ENCODE measurements at regions of chr2 and their contacts with region 1.

Region 1: DNA sequence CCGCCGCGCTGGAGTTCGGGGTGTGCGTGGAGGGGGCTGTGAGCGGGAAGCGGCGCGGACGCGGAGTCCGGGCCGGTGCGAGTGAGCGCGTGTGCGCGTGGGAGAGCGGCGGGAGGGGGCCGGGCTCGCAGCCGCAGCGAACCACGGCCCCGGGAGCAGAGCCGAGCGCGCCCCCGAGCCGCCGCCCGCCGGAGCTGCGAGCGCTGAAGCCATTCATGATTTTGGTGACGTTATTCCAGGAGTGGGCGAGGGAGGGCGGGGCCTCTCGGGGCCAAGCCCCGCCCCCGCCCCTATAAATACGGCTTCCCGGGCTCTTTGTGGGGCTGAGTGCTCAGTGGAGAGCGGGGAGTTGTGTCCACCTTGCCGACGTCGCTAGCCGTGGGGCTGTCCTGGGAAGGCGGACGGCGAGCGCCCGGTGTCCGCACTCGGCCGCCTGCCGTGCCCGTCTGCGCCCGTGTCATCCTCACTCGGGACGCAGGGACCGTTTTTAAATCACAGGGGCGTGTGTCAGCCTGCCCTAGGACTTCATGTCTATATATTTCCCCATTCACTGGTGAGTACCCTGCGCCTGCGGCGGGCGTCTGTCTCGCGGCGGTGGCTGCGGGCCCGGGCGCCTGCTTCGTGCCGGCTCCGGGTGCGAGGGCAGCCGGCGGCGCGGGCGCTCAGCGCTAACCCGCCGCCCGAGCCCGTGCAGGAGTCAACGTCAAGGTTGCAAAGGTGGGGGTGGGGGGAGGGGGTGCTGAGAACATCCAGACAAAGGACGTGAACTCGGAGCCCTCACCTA is at the start of gene LBH:
- DNase-seq: peak; percentile 91 to 93 (median 91)
- ATAC-seq: peak; percentile 83 to 87 (median 86)
- H3K4me3 ChIP-seq: peak within 1 kb of the TSS; percentile 72 to 98 (median 90)
- H3K27ac ChIP-seq: peak within 1 kb of the TSS; percentile 89 to 100 (median 96)
- H3K4me1 ChIP-seq: peaks cover 0 to 57% (median 41%) of the 10 kb centered on the region in 12 donors
- H3K27me3 ChIP-seq: peaks cover 0 to 9% (median 0%) of the 10 kb centered on the region in 9 donors
- CTCF ChIP-seq: peak in 1 of 12 donors; percentile 13
- POLR2A ChIP-seq: peak; percentile 92 to 100
- total RNA-seq, gene LBH: 125 to 226 (median 169) TPM

Region 2: GRCh38 chr2:30098266-30099005 is 133.0 kb before region 1 on chr2:
- intact Hi-C with region 1: no loop called
- DNase-seq: no peak
- ATAC-seq: no peak
- H3K4me3 ChIP-seq: no peak overlapping the region
- H3K27ac ChIP-seq: no peak overlapping the region
- H3K4me1 ChIP-seq: no peaks in the 10 kb centered on the region
- H3K27me3 ChIP-seq: peaks cover 0 to 27% (median 6%) of the 10 kb centered on the region in 9 donors
- CTCF ChIP-seq: no peak
- POLR2A ChIP-seq: no peak

Region 3: DNA sequence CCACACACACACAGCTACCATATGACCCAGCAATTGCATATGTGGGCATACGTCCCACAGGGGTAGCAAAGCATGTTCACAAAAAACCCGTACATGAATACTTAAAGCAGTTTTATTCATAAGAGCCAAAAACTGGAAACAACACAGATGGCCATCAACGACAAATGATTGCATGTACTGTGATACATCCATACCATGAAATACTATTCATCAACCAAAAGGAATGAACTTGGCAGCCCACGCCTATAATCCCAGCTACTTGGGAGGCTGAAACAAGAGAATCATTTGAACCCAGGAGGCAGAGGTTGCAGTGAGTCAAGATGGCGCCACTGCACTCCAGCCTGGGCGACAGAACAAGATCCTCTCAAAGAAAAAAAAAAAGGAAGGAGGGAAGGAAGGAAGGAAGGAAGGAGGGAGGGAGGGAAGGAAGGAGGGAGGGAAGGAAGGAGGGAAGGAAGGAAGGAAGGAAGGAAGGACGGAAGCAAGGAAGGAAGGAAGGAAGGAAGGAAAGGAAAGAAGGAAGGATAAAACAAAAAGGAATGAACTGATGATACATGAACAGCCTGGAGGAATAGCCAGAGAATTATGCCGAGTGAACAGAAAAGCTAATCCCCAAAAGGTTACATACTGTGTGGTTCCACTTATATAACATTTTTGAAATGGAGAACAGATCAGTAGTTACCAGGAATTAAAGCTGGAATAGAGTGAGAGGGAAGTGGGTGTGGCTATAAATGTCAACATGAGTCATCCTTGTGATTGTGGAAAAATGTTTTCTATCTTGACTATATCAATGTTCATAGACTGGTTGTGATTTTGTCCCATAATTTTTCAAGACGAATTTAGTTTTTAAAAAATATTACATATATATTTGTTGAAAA is 104.1 kb before region 1 on chr2:
- intact Hi-C with region 1: no loop called
- DNase-seq: no peak
- ATAC-seq: no peak
- H3K4me3 ChIP-seq: no peak overlapping the region
- H3K27ac ChIP-seq: no peak overlapping the region
- H3K4me1 ChIP-seq: no peaks in the 10 kb centered on the region
- H3K27me3 ChIP-seq: no peaks in the 10 kb centered on the region
- CTCF ChIP-seq: no peak
- POLR2A ChIP-seq: no peak

Region 4: DNA sequence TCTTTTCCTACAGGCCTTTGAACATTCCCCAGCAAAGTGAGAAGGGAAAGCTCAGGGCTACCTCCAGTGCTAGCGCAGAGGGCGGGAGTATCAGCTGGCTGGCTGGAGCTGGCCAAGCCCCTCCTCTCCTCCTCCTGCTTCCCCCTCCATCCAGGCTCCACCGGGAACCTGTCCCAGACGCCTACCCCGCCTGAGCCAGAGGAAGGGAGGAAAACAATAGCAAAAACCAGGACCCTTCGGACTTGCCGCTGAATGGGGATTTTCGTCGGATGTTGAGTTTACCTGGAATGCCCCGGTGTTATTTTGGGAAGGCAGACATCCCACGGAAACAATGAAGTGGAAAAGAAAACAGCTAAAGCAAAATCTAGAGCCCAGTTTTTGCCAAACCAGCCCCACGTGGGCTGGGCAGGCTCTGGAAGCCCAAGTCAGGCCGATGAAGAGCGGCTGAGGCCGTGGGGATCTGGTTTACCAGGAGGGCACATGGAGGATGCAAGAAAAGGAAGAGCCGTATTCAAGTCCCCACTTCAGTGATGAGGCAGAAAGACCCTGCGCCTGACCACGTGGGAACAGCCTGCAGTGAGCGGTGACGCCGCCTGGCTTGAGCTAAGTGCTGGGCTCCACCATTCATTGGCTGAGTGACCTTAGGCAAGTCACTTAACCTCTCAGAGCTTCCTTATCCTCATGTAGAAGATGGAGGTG is 115.2 kb after region 1 on chr2:
- intact Hi-C with region 1: loop called in 7 of 10 experiments (anchors 2 to 5 kb)
- DNase-seq: peak; percentile 85 to 92 (median 88)
- ATAC-seq: peak; percentile 96 to 98 (median 96)
- H3K4me3 ChIP-seq: peak overlapping the region; percentile 5 to 63 (median 54)
- H3K27ac ChIP-seq: peak overlapping the region; percentile 69 to 96 (median 86)
- H3K4me1 ChIP-seq: peaks cover 8 to 55% (median 37%) of the 10 kb centered on the region in 12 donors
- H3K27me3 ChIP-seq: no peaks in the 10 kb centered on the region
- CTCF ChIP-seq: no peak
- POLR2A ChIP-seq: peak in 1 of 2 donors; percentile 69

Region 5: GRCh38 chr2:30366199-30366691 is 134.8 kb after region 1 on chr2:
- intact Hi-C with region 1: loop called in 1 of 10 experiments (anchors 5 kb)
- DNase-seq: peak in 1 of 5 donors; percentile 41
- ATAC-seq: peak in 3 of 4 donors; percentile 11 to 85 (median 33)
- H3K4me3 ChIP-seq: no peak overlapping the region
- H3K27ac ChIP-seq: peak overlapping the region in 10 of 12 donors; percentile 41 to 76 (median 53)
- H3K4me1 ChIP-seq: peaks cover 17 to 47% (median 28%) of the 10 kb centered on the region in 12 donors
- H3K27me3 ChIP-seq: no peaks in the 10 kb centered on the region
- CTCF ChIP-seq: no peak
- POLR2A ChIP-seq: no peak

Region 6: DNA sequence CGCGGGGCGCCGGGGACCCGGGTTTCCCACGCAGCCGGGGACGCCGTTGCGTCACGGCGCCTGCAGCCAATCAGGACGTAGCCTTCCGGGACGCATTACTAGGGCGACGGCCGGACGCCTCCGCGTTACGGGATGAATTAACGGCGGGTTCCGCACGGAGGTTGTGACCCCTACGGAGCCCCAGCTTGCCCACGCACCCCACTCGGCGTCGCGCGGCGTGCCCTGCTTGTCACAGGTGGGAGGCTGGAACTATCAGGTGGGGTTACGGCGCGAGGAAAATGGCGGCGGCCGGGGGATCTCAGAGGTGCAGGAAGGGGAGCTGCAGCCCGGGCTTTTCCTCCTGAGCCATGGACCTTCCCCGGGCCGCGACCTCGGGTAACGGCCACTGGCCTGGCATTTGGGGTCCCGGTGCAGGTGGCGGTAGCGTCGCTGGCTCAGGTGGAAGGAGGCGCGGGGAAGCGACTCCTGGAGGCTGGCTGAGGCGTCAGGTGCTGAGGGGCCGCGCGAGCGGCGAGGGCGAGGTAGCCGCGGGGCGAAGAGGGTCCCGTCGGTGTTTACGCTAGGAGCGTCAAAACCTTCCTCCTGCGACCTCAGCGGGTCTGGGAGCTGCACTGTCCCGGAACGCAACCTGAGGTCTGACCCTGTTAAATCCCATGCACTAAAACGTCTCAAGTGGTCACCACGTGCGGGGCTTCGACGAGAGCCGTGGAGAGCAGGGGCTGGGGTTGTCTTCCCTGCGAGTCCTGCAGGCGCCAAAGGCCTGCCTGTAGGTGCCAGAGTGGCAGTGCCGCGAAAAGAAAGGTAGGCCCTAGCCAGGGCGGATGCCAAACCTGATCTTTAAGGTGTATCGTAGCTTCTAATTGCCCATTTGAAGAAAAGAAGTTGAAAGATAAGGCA is 216.0 kb after region 1 on chr2 and contains the start of gene LCLAT1:
- intact Hi-C with region 1: loop called in 4 of 10 experiments (anchors 10 kb)
- DNase-seq: peak; percentile 87 to 93 (median 87)
- ATAC-seq: peak; percentile 84 to 98 (median 98)
- H3K4me3 ChIP-seq: peak within 1 kb of the TSS; percentile 68 to 99 (median 91)
- H3K27ac ChIP-seq: peak within 1 kb of the TSS; percentile 49 to 91 (median 86)
- H3K4me1 ChIP-seq: peaks cover 0 to 30% (median 13%) of the 10 kb centered on the region in 12 donors
- H3K27me3 ChIP-seq: no peaks in the 10 kb centered on the region
- CTCF ChIP-seq: peak in 3 of 12 donors; percentile 8 to 20 (median 10)
- POLR2A ChIP-seq: peak in 1 of 2 donors; percentile 59
- total RNA-seq, gene LCLAT1: 32.6 to 70.2 (median 46.9) TPM

Region 7: DNA sequence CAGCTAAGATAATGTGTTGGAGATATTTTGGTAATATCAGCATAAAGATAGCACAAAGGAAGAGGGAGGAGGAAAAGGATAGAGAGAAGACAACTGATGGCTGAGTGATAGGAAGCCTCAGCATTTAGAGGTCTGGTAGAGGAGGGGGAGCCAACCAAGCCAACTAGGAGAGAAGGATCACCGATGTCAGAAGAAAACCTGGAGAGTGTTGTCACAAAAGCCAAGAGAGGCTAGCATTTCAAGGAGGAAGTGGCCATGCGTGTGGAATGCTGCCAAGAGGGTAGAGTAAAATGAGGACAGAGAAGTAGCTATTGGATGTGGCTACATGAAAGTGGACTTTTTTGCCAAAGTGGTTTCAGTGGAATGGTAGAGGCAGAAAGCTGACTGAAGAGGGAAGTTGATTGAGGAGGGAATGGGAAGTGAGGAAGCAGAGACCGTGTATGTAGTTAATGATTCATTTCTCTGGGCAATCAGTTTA is 250.0 kb after region 1 on chr2:
- intact Hi-C with region 1: loop called in 3 of 10 experiments (anchors 5 to 10 kb)
- DNase-seq: peak in 4 of 5 donors; percentile 34 to 69 (median 48)
- ATAC-seq: peak in 3 of 4 donors; percentile 38 to 50 (median 43)
- H3K4me3 ChIP-seq: no peak overlapping the region
- H3K27ac ChIP-seq: peak overlapping the region in 10 of 12 donors; percentile 2 to 62 (median 44)
- H3K4me1 ChIP-seq: peaks cover 3 to 49% (median 26%) of the 10 kb centered on the region in 12 donors
- H3K27me3 ChIP-seq: no peaks in the 10 kb centered on the region
- CTCF ChIP-seq: no peak
- POLR2A ChIP-seq: no peak

Measured in heart left ventricle (tissue), 16 donors.